HepG2 (cell line): ENCODE measurements at regions of chr16 and their contacts with region 1.

Region 1: GRCh38 chr16:10579965-10580882 is at the start of gene EMP2:
- DNase-seq: peak; percentile 84
- ATAC-seq: peak; percentile 92
- H3K4me3 ChIP-seq: peak within 1 kb of the TSS; percentile 79 to 93 (median 79)
- H3K27ac ChIP-seq: peak within 1 kb of the TSS; percentile 56
- H3K4me1 ChIP-seq: peaks cover 59% of the 10 kb centered on the region
- H3K27me3 ChIP-seq: peaks cover 0 to 3% of the 10 kb centered on the region in 2 experiments; a peak in 1 of 5 replicates
- CTCF ChIP-seq: peak; percentile 97
- EP300 ChIP-seq: peak; percentile 27 to 46; a peak in 1 of 4 replicates
- POLR2A ChIP-seq: peak; percentile 43 to 88
- RAD21 ChIP-seq: peak; percentile 91
- total RNA-seq, gene EMP2: 13.4 and 24.6 TPM in 2 replicates

Region 2: DNA sequence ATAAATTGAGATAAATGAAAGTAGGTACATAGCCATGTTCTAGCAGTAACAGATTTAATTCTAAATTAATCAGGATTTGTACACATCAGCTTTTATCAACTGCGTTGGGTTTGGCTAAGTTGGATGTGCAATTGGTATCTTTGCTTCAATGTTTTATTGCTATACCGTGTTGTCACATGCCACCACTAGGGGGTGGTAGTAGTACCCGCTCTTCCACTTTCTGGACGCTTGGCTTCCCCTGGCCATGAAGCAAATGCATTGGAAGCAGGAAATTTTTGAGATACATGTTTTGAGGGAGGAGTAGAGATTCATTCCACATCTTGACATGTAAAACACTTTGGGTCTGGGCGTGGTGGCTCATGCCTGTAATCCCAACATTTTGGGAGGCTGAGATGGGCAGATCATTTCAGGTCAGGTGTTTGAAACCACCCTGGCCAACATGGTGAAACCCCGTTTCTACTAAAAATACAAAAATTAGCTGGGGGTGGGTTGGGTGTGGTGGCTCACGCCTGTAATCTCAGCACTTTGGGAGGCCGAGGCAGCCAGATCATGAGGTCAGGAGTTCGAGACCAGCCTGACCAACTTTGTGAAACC is 58.4 kb before region 1 on chr16:
- CTCF ChIA-PET with region 1: interaction called, 4 read pairs
- POLR2A ChIA-PET with region 1: interaction called, 9 read pairs
- in situ Hi-C with region 1: no loop called
- intact Hi-C with region 1: loop called (anchors 2 kb)
- DNase-seq: peak; percentile 79
- ATAC-seq: peak; percentile 42
- H3K4me3 ChIP-seq: no peak overlapping the region
- H3K27ac ChIP-seq: no peak overlapping the region
- H3K4me1 ChIP-seq: peaks cover 27% of the 10 kb centered on the region
- H3K27me3 ChIP-seq: no peaks in the 10 kb centered on the region
- CTCF ChIP-seq: peak; percentile 93
- EP300 ChIP-seq: no peak
- POLR2A ChIP-seq: no peak
- RAD21 ChIP-seq: peak; percentile 58; the same call in 1 of the 2 replicates

Region 3: DNA sequence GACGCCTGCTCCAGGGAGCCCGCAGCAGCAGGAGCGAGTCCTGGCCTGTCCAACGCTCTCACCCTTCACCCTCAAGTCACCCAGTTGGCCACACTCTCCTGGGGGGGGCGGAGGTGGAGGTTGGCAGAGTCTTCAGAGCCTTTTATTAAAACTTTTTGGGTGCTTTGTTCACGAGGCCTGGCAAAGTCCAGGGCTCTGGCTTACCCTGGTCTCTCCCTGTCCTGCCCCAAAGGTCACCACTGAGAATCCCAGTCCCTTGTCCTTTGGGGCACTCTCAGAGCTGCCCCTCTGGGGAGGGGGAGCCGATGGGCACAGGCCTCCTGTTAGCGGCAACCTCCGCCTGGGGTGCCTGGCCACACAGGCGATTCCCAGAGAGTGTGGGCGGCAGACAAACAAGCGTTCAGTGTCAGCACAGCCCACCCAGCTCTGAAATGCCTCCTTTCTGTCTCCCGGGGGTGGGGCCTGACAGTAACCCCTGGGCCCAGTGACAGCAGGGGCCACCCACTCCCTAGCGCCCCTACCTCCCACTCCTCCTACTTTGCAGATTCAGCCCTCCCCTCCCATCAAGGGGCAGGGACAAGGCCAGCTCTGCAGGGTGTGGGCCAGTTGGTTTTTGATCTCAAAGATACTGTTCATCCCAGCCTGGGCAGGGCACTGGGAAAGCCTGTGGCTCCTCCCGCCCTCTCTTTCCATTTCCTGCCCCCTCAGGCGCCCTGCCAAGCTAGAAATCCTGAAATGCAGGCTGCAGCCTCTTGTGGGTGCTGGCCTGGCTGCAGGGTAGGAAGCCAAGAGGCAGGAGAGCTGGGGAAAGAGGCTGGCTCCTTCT is 36.7 kb after region 1 on chr16:
- CTCF ChIA-PET with region 1: no interaction called
- POLR2A ChIA-PET with region 1: interaction called, 11 read pairs
- in situ Hi-C with region 1: no loop called
- intact Hi-C with region 1: loop called (anchors 2 kb)
- DNase-seq: peak; percentile 96
- ATAC-seq: peak; percentile 91
- H3K4me3 ChIP-seq: peak overlapping the region; percentile 44 to 77 (median 48)
- H3K27ac ChIP-seq: peak overlapping the region; percentile 72
- H3K4me1 ChIP-seq: peaks cover 95% of the 10 kb centered on the region
- H3K27me3 ChIP-seq: no peaks in the 10 kb centered on the region
- CTCF ChIP-seq: peak; percentile 61
- EP300 ChIP-seq: no peak; a peak in 1 of 4 replicates
- POLR2A ChIP-seq: peak in 1 of 2 experiments; percentile 83; a peak in 3 of 4 replicates
- RAD21 ChIP-seq: no peak; the same call in 1 of the 2 replicates

Region 4: DNA sequence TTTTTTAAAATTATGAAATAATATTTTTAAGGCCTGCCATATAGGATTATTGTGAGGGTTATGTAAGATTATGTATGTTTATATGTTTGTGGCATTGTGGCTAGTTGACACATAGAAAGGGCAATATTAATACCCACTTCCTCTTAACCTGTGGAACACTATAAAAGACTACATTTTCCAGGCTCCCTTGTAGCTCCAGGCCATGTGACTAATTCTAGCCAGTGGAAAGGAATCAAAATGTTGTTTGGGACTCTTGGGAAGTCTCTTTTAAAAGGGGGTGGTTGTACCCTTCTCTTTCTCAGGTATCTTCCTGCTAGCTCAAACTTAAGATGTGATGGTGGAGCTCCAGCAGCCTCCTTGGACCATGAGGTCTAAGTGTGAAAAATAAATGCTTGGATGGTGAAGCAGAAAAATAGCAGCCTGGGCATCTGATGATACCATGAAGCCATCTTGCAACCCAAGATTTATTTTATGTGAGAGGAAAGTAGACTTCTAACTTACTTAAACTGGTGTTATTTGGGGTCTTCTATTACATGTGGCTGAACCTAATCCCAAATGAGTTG is 75.3 kb after region 1 on chr16:
- CTCF ChIA-PET with region 1: no interaction called
- POLR2A ChIA-PET with region 1: no interaction called
- in situ Hi-C with region 1: no loop called
- intact Hi-C with region 1: loop called (anchors 2 kb)
- DNase-seq: no peak
- ATAC-seq: no peak
- H3K4me3 ChIP-seq: no peak overlapping the region; a peak in 1 of 6 replicates
- H3K27ac ChIP-seq: no peak overlapping the region
- H3K4me1 ChIP-seq: peaks cover 94% of the 10 kb centered on the region
- H3K27me3 ChIP-seq: no peaks in the 10 kb centered on the region
- CTCF ChIP-seq: no peak
- EP300 ChIP-seq: no peak
- POLR2A ChIP-seq: no peak
- RAD21 ChIP-seq: no peak

Region 5: GRCh38 chr16:10729104-10730048 is 149.2 kb after region 1 on chr16:
- CTCF ChIA-PET with region 1: no interaction called
- POLR2A ChIA-PET with region 1: interaction called, 3 read pairs
- in situ Hi-C with region 1: no loop called
- intact Hi-C with region 1: loop called (anchors 2 kb)
- DNase-seq: no peak
- ATAC-seq: no peak
- H3K4me3 ChIP-seq: no peak overlapping the region
- H3K27ac ChIP-seq: no peak overlapping the region
- H3K4me1 ChIP-seq: peaks cover 35% of the 10 kb centered on the region
- H3K27me3 ChIP-seq: no peaks in the 10 kb centered on the region
- CTCF ChIP-seq: no peak
- EP300 ChIP-seq: no peak
- POLR2A ChIP-seq: no peak
- RAD21 ChIP-seq: no peak

Region 6: DNA sequence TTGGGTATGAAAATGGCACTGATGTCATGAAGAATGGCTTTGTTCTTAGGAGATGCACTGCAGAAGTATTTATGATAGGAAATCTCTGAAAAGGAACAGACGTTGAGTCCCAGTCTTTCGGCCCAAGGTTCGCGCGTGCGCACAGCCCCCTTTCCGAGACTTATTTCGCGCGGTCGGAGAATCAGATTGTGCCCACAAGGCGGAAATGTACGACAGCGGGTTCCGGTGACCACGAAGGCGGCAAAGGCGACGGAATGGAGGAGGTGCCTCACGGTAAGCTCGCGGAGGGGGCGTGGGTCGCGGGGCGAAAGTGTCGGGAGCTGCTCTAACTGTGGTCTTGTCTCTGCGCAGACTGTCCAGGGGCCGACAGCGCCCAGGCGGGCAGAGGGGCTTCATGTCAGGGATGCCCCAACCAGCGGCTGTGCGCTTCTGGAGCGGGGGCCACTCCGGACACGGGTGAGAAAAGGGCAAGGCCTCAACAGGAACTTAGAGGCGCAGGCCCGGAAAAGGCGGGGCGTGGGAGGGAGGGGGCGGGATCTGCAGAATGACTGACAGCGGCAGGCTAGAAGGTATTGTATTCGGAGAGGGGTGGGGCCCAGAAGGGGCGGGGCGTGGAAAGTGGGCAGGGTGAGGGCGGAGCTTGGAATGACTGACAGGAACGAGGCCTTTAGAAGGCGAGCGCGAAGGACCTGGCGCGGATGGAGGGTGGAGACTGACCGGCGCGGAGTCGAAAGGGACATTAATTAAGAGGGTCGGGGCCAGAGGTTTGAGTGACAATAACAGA is 163.6 kb after region 1 on chr16 and contains the start of gene NUBP1:
- CTCF ChIA-PET with region 1: no interaction called
- POLR2A ChIA-PET with region 1: interaction called, 18 read pairs
- in situ Hi-C with region 1: no loop called
- intact Hi-C with region 1: no loop called
- DNase-seq: peak; percentile 98
- ATAC-seq: peak; percentile 96
- H3K4me3 ChIP-seq: peak within 1 kb of the TSS; percentile 71 to 77 (median 74)
- H3K27ac ChIP-seq: peak within 1 kb of the TSS; percentile 94
- H3K4me1 ChIP-seq: peaks cover 31% of the 10 kb centered on the region
- H3K27me3 ChIP-seq: no peaks in the 10 kb centered on the region; a peak in 1 of 5 replicates
- CTCF ChIP-seq: peak; percentile 33
- EP300 ChIP-seq: peak in 1 of 2 experiments; percentile 61; a peak in 2 of 4 replicates
- POLR2A ChIP-seq: peak; percentile 90 to 97
- RAD21 ChIP-seq: peak; percentile 73; the same call in 1 of the 2 replicates
- total RNA-seq, gene NUBP1: 70.4 and 85.8 TPM in 2 replicates